Naive thymus-derived CD4-positive, alpha-beta T cell (primary cell): ENCODE measurements at regions of chr1 and their contacts with region 1.

Region 1: DNA sequence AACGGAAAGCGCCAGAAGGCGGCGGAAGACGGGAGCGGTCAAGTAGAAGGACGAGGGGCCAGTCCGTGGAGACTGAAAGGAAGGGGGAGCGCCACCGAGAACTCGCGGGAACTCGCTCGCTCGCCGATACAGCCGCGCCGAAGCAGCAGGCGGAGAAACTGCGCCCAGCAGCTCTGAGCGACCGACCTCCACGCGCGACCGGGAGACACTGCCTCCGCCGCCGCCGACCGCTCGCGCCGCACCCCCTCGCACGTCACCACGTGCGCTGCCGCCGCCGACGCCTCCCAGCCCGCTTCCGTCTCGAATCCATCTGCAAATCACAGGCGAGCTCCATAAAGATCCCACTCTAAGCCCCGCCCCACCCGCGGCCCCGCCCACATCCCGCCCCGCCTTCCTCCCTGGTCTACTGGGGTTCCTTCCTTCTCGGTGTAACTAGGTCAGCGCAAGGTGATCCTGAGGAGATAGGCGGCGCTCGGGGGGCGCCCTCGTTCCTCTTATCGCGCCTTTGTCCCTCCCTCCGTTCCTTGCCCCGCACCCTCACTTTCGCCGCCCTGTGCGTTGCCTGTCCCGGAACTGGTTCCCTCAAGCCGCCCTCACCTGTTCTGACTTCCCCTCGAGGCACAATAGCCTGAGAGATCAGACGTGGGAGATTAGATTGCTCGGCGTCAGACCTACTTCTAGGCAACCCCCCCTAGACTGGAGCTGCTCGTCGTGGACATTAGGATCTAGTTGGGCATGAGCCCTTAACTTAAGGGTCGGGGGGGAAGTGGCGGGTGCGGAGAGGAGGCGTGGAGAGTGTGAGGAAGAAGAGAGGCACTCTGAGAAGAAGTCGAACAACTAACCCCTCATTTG is at the start of gene IVNS1ABP:
- DNase-seq: peak; percentile 91 to 97 (median 95)
- ATAC-seq: peak; percentile 88
- H3K4me3 ChIP-seq: peak within 1 kb of the TSS; percentile 95
- H3K4me3 Mint-ChIP-seq: peak within 1 kb of the TSS; percentile 92 to 100 (median 98)
- H3K27ac ChIP-seq: peak within 1 kb of the TSS; percentile 99
- H3K27ac Mint-ChIP-seq: peak within 1 kb of the TSS; percentile 96 to 99 (median 99)
- H3K4me1 ChIP-seq: peaks cover 31 to 42% of the 10 kb centered on the region in 2 donors
- H3K4me1 Mint-ChIP-seq: peaks cover 39 to 55% (median 46%) of the 10 kb centered on the region in 7 donors
- H3K27me3 ChIP-seq: no peaks in the 10 kb centered on the region
- H3K27me3 Mint-ChIP-seq: peaks cover 0 to 2% (median 0%) of the 10 kb centered on the region in 5 donors
- total RNA-seq, gene IVNS1ABP: 169 to 268 (median 193) TPM

Region 2: GRCh38 chr1:183471743-183472487 is 1845.3 kb before region 1 on chr1:
- CTCF ChIA-PET with region 1: no interaction called
- POLR2A ChIA-PET with region 1: no interaction called
- intact Hi-C with region 1: loop called (anchors 2 to 5 kb)
- DNase-seq: peak; percentile 90 to 99 (median 96)
- ATAC-seq: peak; percentile 82
- H3K4me3 ChIP-seq: peak overlapping the region; percentile 74
- H3K4me3 Mint-ChIP-seq: peak overlapping the region; percentile 94 to 100 (median 98)
- H3K27ac ChIP-seq: peak overlapping the region; percentile 90
- H3K27ac Mint-ChIP-seq: peak overlapping the region in 8 of 9 donors; percentile 97 to 100 (median 99)
- H3K4me1 ChIP-seq: peaks cover 17 to 34% of the 10 kb centered on the region in 2 donors
- H3K4me1 Mint-ChIP-seq: peaks cover 3 to 32% (median 14%) of the 10 kb centered on the region in 7 donors
- H3K27me3 ChIP-seq: no peaks in the 10 kb centered on the region
- H3K27me3 Mint-ChIP-seq: peaks cover 0 to 7% (median 0%) of the 10 kb centered on the region in 5 donors

Region 3: DNA sequence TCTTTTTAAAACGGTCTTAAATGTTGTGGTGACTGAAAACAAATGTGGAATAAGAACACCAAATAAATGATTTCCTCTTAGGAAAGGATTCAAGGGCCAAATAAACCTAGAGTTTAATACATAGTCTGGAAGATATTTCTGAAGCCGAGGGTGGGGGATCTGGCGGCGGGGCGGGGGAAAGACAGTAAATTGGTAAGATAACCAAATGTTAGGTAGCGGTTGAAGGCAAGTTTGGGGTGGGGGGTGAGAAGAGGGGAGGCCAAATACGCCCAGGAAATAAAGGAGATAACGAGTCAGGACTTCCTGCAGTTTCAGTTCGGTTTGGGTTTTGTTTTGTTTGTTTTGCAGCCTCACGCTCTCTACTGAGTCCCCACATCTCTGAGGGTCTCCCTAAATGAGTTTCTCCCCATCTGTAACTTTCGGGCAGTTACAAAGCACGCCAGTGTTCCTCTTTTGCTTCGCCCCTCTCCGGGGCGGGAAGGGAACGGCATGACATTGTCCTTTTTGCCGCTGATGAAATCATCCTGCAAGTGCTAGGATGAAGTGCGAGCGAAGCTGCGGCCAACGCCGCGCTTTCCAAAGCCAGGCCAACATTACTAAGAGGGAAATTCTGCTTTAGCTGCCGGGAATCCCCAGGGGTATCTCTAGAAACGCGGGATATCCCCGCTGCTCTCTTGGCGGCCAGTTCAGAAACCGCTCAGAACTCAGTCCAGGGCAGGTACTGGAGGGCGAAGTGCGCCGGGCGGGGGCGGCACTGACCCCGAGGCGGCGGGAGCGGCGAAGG is 343.8 kb before region 1 on chr1:
- CTCF ChIA-PET with region 1: no interaction called
- POLR2A ChIA-PET with region 1: no interaction called
- intact Hi-C with region 1: loop called in 1 of 2 experiments (anchors 10 kb)
- DNase-seq: peak in 1 of 9 donors; percentile 36
- ATAC-seq: peak; percentile 73
- H3K4me3 ChIP-seq: peak overlapping the region; percentile 63
- H3K4me3 Mint-ChIP-seq: peak overlapping the region; percentile 82 to 96 (median 90)
- H3K27ac ChIP-seq: peak overlapping the region; percentile 7
- H3K27ac Mint-ChIP-seq: peak overlapping the region; percentile 11 to 94 (median 58)
- H3K4me1 ChIP-seq: peaks cover 0 to 24% of the 10 kb centered on the region in 2 donors
- H3K4me1 Mint-ChIP-seq: peaks cover 9 to 56% (median 21%) of the 10 kb centered on the region in 7 donors
- H3K27me3 ChIP-seq: no peaks in the 10 kb centered on the region
- H3K27me3 Mint-ChIP-seq: peaks cover 12 to 38% (median 27%) of the 10 kb centered on the region in 5 donors

Region 4: GRCh38 chr1:185291652-185292051 is 25.6 kb before region 1 on chr1:
- CTCF ChIA-PET with region 1: no interaction called
- POLR2A ChIA-PET with region 1: interaction called, 8 read pairs
- intact Hi-C with region 1: loop called in 1 of 2 experiments (anchors 2 kb)
- DNase-seq: no peak
- ATAC-seq: peak; percentile 54
- H3K4me3 ChIP-seq: no peak overlapping the region
- H3K4me3 Mint-ChIP-seq: no peak overlapping the region
- H3K27ac ChIP-seq: no peak overlapping the region
- H3K27ac Mint-ChIP-seq: peak overlapping the region in 5 of 9 donors; percentile 9 to 88 (median 74)
- H3K4me1 ChIP-seq: peaks cover 0 to 13% of the 10 kb centered on the region in 2 donors
- H3K4me1 Mint-ChIP-seq: peaks cover 11 to 59% (median 43%) of the 10 kb centered on the region in 7 donors
- H3K27me3 ChIP-seq: no peaks in the 10 kb centered on the region
- H3K27me3 Mint-ChIP-seq: no peaks in the 10 kb centered on the region

Region 5: DNA sequence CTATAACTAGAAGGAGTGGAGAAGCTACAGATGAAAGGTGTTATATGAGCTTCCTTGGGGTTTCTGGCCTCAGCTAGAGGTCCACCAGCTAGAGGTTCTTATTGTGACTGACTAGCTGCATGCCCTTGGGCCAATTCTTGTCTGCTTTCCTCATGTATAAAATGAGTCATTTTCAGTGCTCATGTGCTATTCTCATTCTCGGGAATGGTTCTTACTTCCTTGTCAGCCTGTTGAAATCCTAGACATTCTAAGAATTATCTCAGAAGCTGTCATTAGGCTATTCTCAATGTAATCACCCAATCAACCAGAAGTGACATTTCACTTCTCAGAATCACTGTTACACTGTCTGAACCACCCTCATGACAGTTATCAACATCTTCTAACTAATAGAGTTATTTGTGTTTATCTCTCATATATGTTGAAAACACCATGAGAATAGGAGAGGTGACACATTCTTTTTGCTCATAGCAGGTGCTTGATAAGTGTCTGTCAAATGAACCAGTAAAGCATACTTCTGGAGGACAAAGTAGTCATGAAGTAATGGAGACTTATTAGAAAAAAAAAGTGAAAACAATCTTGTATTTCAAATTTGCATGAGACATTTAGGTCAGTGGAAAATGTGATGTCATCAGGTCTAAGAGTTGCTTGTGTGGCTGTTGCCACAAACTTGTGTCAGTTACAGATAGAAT is 122.6 kb after region 1 on chr1:
- CTCF ChIA-PET with region 1: no interaction called
- POLR2A ChIA-PET with region 1: no interaction called
- intact Hi-C with region 1: loop called in 1 of 2 experiments (anchors 1 kb)
- DNase-seq: peak in 1 of 9 donors; percentile 34
- ATAC-seq: peak; percentile 80
- H3K4me3 ChIP-seq: no peak overlapping the region
- H3K4me3 Mint-ChIP-seq: no peak overlapping the region
- H3K27ac ChIP-seq: no peak overlapping the region
- H3K27ac Mint-ChIP-seq: no peak overlapping the region
- H3K4me1 ChIP-seq: peaks cover 0 to 20% of the 10 kb centered on the region in 2 donors
- H3K4me1 Mint-ChIP-seq: peaks cover 0 to 36% (median 3%) of the 10 kb centered on the region in 7 donors
- H3K27me3 ChIP-seq: no peaks in the 10 kb centered on the region
- H3K27me3 Mint-ChIP-seq: no peaks in the 10 kb centered on the region

Region 6: GRCh38 chr1:185670187-185670627 is 352.9 kb after region 1 on chr1:
- CTCF ChIA-PET with region 1: interaction called, 28 read pairs
- POLR2A ChIA-PET with region 1: interaction called, 37 read pairs
- intact Hi-C with region 1: loop called (anchors 1 kb)
- DNase-seq: peak in 8 of 9 donors; percentile 28 to 72 (median 59)
- ATAC-seq: peak; percentile 82
- H3K4me3 ChIP-seq: no peak overlapping the region
- H3K4me3 Mint-ChIP-seq: no peak overlapping the region
- H3K27ac ChIP-seq: no peak overlapping the region
- H3K27ac Mint-ChIP-seq: peak overlapping the region in 8 of 9 donors; percentile 12 to 75 (median 60)
- H3K4me1 ChIP-seq: peaks cover 4 to 20% of the 10 kb centered on the region in 2 donors
- H3K4me1 Mint-ChIP-seq: peaks cover 22 to 44% (median 33%) of the 10 kb centered on the region in 7 donors
- H3K27me3 ChIP-seq: no peaks in the 10 kb centered on the region
- H3K27me3 Mint-ChIP-seq: no peaks in the 10 kb centered on the region